Aorta (tissue), 5 donors: ENCODE measurements at regions of chr11 and their contacts with region 1.

Region 1: DNA sequence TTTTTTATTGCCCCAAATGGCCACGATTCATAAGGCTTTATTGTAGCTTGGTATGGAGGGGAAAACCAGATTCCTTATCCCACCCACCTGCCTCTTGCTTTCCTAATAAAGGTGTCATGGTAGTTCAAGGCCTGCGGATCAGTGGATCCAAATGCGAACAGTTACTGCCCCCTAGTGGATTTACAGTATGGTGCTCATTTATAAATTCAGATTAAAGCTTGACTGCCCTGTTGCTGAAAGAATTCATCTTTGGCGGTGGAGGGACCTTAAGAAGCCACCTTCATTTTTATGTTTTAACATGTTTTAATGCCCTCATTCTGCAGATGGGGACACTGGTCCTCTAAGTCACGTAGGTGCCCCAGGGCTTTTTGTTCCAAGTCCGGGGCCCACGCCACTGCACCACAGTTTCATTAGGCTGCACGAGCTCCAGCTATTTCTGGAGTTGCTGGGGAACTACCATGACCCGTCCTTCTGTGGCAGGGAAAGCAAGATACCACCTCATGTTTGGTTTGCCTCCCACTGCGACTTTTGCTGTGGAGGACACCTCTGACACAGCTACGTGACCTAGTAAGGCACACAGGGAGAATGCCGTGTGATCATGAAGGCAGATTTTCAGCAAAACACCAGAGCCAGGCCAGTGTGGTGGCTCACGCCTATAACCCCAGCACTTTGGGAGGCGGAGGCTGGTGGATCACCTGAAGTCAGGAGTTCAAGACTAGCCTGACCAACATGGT is 15.6 kb upstream of the INCENP start:
- DNase-seq: no peak
- ATAC-seq: no peak
- H3K4me3 ChIP-seq: no peak overlapping the region
- H3K27ac ChIP-seq: no peak overlapping the region
- H3K4me1 ChIP-seq: peaks cover 3 to 6% of the 10 kb centered on the region in 2 donors
- H3K27me3 ChIP-seq: no peaks in the 10 kb centered on the region

Region 2: DNA sequence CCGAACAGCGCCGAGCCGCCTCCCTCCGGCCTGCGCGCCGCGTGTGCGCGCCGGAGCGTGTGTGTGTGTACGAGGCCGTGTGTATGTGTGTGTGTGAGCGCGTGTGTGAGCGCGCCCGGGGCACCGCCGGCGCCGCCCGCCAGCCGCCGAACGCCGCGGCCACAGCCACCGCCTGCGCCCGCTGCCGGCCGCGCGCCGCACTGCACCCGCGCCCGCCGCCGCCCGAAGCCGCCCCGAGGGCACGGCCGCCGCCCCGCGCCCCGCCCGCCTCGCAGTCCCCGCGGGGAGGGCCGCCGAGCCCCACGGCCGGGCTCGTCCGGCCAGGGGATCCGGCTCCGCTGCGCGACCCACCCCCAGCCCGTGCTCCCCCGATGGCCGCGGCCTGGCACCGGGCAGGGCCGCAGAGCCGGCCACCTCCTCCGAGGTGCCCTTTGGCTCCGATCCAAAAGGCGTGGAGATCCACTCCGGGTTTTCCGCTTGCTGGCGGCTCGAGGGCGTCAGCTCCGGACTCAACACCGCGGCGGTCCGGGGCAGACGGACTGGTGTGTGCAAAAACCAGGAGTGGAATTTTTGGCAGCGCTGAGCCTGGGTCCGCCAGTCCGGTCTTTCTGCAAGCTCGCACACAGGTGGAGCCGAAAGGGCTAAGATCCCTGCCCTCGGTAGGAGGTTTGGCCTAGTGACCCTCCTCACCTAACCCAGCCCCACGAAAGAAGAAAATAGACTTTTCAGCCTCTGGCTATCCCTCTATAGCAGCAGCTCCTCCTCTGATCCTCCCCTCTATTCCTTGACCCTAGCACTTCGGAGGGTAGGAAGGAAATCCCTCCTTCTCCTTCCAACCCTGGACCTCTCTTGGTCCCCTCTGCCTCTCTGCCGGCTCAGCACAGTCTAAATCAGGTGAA is 526.9 kb before region 1 on chr11 and contains the start of gene SYT7:
- intact Hi-C with region 1: loop called in 1 of 2 experiments (anchors 5 kb)
- DNase-seq: peak; percentile 97 to 99
- ATAC-seq: peak; percentile 91
- H3K4me3 ChIP-seq: peak within 1 kb of the TSS; percentile 28 to 82
- H3K27ac ChIP-seq: no peak within 1 kb of the TSS
- H3K4me1 ChIP-seq: no peaks in the 10 kb centered on the region
- H3K27me3 ChIP-seq: no peaks in the 10 kb centered on the region
- total RNA-seq, gene SYT7: 1.0 to 2.3 TPM

Region 3: GRCh38 chr11:61747192-61747966 is 360.8 kb before region 1 on chr11:
- intact Hi-C with region 1: loop called in 1 of 2 experiments (anchors 5 kb)
- DNase-seq: peak; percentile 84 to 91
- ATAC-seq: peak; percentile 82
- H3K4me3 ChIP-seq: no peak overlapping the region
- H3K27ac ChIP-seq: no peak overlapping the region
- H3K4me1 ChIP-seq: no peaks in the 10 kb centered on the region
- H3K27me3 ChIP-seq: no peaks in the 10 kb centered on the region

Region 4: GRCh38 chr11:61899146-61899841 is 208.9 kb before region 1 on chr11:
- intact Hi-C with region 1: loop called (anchors 2 to 5 kb)
- DNase-seq: peak; percentile 89 to 96
- ATAC-seq: peak; percentile 89
- H3K4me3 ChIP-seq: no peak overlapping the region
- H3K27ac ChIP-seq: no peak overlapping the region
- H3K4me1 ChIP-seq: no peaks in the 10 kb centered on the region
- H3K27me3 ChIP-seq: no peaks in the 10 kb centered on the region

Region 5: GRCh38 chr11:61967116-61967923 is 140.9 kb before region 1 on chr11 and contains the start of gene FTH1:
- intact Hi-C with region 1: loop called (anchors 5 kb)
- DNase-seq: peak; percentile 96 to 97
- ATAC-seq: peak; percentile 90
- H3K4me3 ChIP-seq: peak within 1 kb of the TSS; percentile 87 to 96
- H3K27ac ChIP-seq: peak within 1 kb of the TSS; percentile 63 to 96
- H3K4me1 ChIP-seq: no peaks in the 10 kb centered on the region
- H3K27me3 ChIP-seq: no peaks in the 10 kb centered on the region
- total RNA-seq, gene FTH1: 2,602 to 2,677 TPM